A549 (cell line): ENCODE measurements at regions of chr2 and their contacts with region 1.

Region 1: GRCh38 chr2:112692496-112692911 is 28.3 kb upstream of the NT5DC4 start:
- DNase-seq: peak; percentile 80 to 97
- ATAC-seq: peak; percentile 95 to 97
- H3K4me3 ChIP-seq: no peak overlapping the region
- H3K27ac ChIP-seq: peak overlapping the region; percentile 93 to 94
- H3K4me1 ChIP-seq: peaks cover 46% of the 10 kb centered on the region
- CTCF ChIP-seq: no peak
- EP300 ChIP-seq: peak in 1 of 2 experiments; percentile 45; a peak in 1 of 5 replicates
- POLR2A ChIP-seq: no peak
- RAD21 ChIP-seq: no peak; a peak in 1 of 5 replicates

Region 2: GRCh38 chr2:112229348-112229747 is 463.2 kb before region 1 on chr2:
- CTCF ChIA-PET with region 1: no interaction called
- POLR2A ChIA-PET with region 1: no interaction called
- DNase-seq: peak in 1 of 2 experiments; percentile 33
- ATAC-seq: no peak
- H3K4me3 ChIP-seq: no peak overlapping the region
- H3K27ac ChIP-seq: no peak overlapping the region
- H3K4me1 ChIP-seq: no peaks in the 10 kb centered on the region
- CTCF ChIP-seq: no peak
- EP300 ChIP-seq: no peak
- POLR2A ChIP-seq: no peak
- RAD21 ChIP-seq: no peak

Region 3: DNA sequence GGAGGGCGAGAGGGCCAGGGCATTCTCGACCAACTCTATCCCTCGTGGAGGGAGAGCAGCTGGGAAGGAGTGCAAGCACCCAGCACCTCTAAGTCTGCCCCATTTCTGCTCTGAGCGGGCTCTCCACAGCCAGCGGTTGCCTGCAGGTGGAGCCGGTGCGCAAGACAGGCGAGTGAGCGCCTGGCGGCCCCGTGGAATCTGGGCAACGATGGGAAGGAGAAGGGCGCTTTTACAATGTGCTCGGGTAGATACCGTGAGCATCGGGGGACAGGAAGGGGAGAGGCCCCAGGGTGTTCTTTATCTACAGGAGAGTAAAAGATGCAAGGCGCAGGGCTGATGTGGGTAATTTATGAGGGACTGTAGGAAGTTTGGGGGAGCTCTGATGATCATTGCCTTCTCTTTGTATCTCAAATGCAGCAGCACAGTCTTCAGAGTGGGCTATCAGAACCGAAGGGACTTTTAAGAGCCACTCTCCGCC is 211.4 kb before region 1 on chr2:
- CTCF ChIA-PET with region 1: no interaction called
- POLR2A ChIA-PET with region 1: no interaction called
- DNase-seq: peak; percentile 87 to 89
- ATAC-seq: peak; percentile 86 to 94
- H3K4me3 ChIP-seq: peak overlapping the region; percentile 59
- H3K27ac ChIP-seq: peak overlapping the region; percentile 84 to 93
- H3K4me1 ChIP-seq: peaks cover 13% of the 10 kb centered on the region
- CTCF ChIP-seq: peak; percentile 70
- EP300 ChIP-seq: no peak
- POLR2A ChIP-seq: peak; percentile 21; the same call in 1 of the 2 replicates
- RAD21 ChIP-seq: peak; percentile 81 to 82

Region 4: GRCh38 chr2:112645310-112646101 is 47.0 kb before region 1 on chr2 and contains the start of gene SLC20A1:
- CTCF ChIA-PET with region 1: interaction called, 5 read pairs
- POLR2A ChIA-PET with region 1: interaction called, 10 read pairs
- DNase-seq: peak; percentile 81 to 94
- ATAC-seq: peak; percentile 83 to 94
- H3K4me3 ChIP-seq: peak within 1 kb of the TSS; percentile 98
- H3K27ac ChIP-seq: peak within 1 kb of the TSS; percentile 98 to 99
- H3K4me1 ChIP-seq: peaks cover 43% of the 10 kb centered on the region
- CTCF ChIP-seq: peak; percentile 45
- EP300 ChIP-seq: peak in 1 of 2 experiments; percentile 28; a peak in 1 of 5 replicates
- POLR2A ChIP-seq: peak; percentile 95
- RAD21 ChIP-seq: peak; percentile 32 to 53; a peak in 4 of 5 replicates
- polyA plus RNA-seq, gene SLC20A1: 86.8 and 88.7 TPM in 2 replicates

Region 5: GRCh38 chr2:112666764-112667122 is 25.8 kb before region 1 on chr2:
- CTCF ChIA-PET with region 1: interaction called, 10 read pairs
- POLR2A ChIA-PET with region 1: no interaction called
- DNase-seq: no peak
- ATAC-seq: peak; percentile 11 to 36; a peak in 5 of 6 replicates
- H3K4me3 ChIP-seq: no peak overlapping the region
- H3K27ac ChIP-seq: no peak overlapping the region
- H3K4me1 ChIP-seq: peaks cover 16% of the 10 kb centered on the region
- CTCF ChIP-seq: no peak
- EP300 ChIP-seq: no peak
- POLR2A ChIP-seq: no peak
- RAD21 ChIP-seq: no peak

Region 6: DNA sequence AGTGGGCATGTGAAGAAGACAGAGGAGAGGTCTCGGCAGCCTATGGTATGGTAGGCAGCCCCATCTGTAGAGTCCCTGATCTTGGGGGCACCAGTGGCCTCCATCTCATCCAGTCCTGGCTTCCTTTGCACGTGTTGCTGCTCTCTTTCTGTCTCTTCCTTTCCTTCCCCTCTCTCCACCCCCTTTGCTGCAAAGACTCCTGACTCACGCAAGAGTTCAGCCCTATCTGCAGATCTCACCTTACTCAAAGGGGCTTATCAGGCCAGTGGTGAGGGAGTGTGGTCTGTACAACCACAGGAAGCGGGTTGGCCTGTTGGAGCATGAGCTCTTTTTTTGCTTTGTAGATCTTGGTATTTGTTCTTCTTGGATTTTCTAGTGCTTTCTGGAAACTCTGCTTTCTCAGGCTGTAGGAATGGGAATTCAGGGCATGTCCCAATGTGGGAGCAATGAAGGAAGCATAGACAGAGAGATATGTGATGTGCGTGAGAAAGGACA is 13.7 kb after region 1 on chr2:
- CTCF ChIA-PET with region 1: interaction called, 15 read pairs
- POLR2A ChIA-PET with region 1: no interaction called
- DNase-seq: no peak
- ATAC-seq: no peak; a peak in 1 of 6 replicates
- H3K4me3 ChIP-seq: no peak overlapping the region
- H3K27ac ChIP-seq: no peak overlapping the region
- H3K4me1 ChIP-seq: no peaks in the 10 kb centered on the region
- CTCF ChIP-seq: no peak
- EP300 ChIP-seq: no peak
- POLR2A ChIP-seq: no peak
- RAD21 ChIP-seq: no peak

Region 7: DNA sequence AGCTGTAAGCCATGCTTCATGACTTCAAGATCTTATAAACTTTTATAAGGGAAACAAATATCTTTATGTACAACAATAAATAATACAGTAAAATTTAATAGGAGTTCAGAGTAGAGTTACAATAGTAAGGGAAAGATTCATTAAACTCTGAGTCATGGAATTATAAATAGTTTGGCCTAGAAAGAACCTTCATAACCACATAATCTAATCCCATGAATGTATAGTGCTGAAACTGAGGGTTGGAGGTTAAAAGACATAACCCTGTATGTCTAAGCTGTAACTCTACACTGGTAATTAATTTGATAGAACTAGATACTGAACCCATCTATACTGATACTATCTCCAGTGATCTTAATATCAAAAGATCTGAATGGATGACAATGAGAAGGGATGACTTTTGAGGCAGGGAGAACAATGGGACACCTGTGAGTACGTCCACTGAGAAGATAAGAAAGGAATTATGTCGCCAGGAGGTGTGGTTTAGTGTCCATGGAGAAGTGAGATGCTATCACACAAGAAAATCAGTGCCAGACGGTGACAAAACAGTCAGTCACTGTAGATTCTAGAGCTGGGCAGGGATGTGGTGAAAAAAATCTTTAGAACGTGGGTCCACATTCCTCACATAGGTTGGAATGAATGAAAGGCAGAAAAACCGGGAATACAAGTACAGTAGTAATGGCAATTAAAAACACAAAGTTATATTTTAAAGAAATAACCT is 376.4 kb after region 1 on chr2:
- CTCF ChIA-PET with region 1: no interaction called
- POLR2A ChIA-PET with region 1: no interaction called
- DNase-seq: no peak
- ATAC-seq: no peak
- H3K4me3 ChIP-seq: no peak overlapping the region
- H3K27ac ChIP-seq: no peak overlapping the region
- H3K4me1 ChIP-seq: peaks cover 7% of the 10 kb centered on the region; the same call in 1 of the 3 replicates
- CTCF ChIP-seq: no peak
- EP300 ChIP-seq: no peak
- POLR2A ChIP-seq: no peak
- RAD21 ChIP-seq: no peak